HEK293T (cell line): ENCODE measurements at regions of chr3 and their contacts with region 1.

Region 1: GRCh38 chr3:58299839-58300516 is 6.1 kb upstream of the RPP14 start:
- DNase-seq: no peak

Region 2: DNA sequence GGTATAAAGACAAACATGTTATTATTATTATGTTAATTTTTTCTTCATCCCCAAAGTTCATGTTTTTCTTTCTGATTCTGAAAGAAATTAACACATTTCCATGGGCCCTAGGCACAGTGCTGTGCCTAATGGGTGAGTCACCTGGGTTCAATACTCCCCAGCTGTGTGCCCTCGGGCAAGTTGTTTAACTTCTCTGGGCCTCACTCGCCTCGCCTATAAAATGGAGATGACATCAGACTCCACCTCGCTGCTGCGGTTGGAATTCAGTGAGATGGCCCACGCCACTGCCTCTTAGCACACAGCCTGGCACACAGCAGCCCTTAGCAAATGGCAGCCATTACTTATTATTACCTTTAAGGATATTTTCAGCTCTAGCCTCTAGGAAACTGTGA is 111.8 kb before region 1 on chr3:
- CTCF ChIA-PET with region 1: interaction called, 21 read pairs
- POLR2A ChIA-PET with region 1: no interaction called
- DNase-seq: no peak